ENCODE measurements at regions of chr10 and their contacts with region 1.

Region 1: DNA sequence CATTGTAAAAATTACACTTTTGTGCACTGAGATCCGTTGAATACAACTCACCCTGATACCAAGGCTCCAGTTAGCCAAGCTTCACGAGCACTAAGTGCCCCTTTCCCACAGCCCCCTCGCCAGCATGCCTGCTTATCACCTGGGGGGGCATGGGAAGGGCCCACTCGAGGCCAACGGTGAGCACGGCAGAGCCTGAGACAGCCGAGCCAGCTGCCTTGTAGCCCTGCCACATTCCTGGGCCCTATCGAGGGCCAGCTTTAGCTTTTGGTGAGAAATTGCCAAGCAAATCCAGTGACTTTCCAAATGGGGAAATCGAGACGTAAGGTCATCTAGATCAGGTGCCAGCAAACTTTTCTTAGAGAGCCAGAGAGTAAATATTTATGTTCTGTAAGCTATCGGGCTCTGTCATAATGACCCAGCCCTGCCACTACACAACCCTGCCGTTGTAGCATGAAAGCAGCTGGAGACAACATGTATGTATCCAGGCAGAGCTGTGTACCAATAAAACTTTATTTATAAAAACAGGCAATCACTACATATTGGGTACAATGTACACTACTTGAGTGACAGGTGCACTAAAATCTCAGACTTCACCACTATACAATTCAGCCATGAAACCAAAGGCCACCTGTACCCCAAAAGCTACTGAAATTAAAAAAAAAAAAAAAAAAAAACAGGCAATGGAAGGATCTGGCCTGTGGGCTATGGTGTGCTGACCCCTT is 83.6 kb downstream of the FAM53B start:
- DNase-seq: no peak
- H3K4me3 ChIP-seq: no peak overlapping the region
- H3K27ac ChIP-seq: no peak overlapping the region
- H3K4me1 ChIP-seq: peaks cover 0 to 9% (median 0%) of the 10 kb centered on the region in 4 donors
- H3K27me3 ChIP-seq: no peaks in the 10 kb centered on the region
- CTCF ChIP-seq: no peak
- EP300 ChIP-seq: no peak
- POLR2A ChIP-seq: no peak

Region 2: DNA sequence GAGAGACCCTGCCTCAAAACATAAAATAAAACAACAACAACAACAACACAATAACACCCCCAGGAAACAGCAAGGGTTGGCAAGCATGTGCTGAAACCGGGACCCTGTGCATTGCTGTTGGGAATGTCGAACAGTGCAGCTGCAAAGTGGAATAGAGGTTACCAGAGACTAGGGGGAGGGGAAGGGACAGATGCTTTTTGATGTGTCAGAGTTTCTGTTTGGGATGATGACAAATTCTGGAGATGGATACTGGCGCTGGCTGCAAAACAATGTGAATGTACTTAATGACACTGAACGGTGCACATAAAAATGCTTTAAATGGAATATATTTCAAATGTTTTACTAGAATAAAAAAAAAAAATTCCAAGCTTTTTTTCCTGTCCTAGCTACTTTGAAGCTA is 780.6 kb after region 1 on chr10:
- in situ Hi-C with region 1: no loop called
- intact Hi-C with region 1: loop called (anchors 5 kb)
- DNase-seq: no peak
- H3K4me3 ChIP-seq: no peak overlapping the region
- H3K27ac ChIP-seq: no peak overlapping the region
- H3K4me1 ChIP-seq: no peaks in the 10 kb centered on the region
- H3K27me3 ChIP-seq: no peaks in the 10 kb centered on the region
- CTCF ChIP-seq: no peak
- EP300 ChIP-seq: no peak
- POLR2A ChIP-seq: no peak

Measured in transverse colon (tissue), 4 donors.